ENCODE measurements at regions of chr1 and their contacts with region 1.

Region 1: DNA sequence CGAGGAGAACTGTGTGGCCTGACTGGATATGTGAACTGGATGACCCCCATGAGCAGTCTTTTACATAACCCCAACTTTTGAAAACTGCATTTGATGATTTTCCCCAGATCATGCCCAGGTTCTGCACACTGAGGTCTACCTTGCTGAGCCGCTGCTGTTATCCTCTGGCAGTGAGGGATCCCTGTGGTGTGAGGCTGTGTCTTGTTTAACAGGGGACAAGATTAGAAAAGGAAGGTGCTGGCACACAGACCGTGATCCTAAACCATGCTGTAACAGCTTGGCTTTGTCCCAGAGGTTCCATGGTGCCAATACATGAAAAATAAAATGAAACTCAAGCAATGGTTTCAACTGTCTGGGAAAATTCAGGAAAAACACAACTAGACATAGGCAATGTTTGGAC is 134.2 kb downstream of the ZZZ3 start:
- DNase-seq: no peak
- H3K4me3 ChIP-seq: no peak overlapping the region
- H3K27ac ChIP-seq: no peak overlapping the region
- H3K4me1 ChIP-seq: no peaks in the 10 kb centered on the region
- H3K27me3 ChIP-seq: no peaks in the 10 kb centered on the region
- CTCF ChIP-seq: no peak

Region 2: GRCh38 chr1:77514921-77515776 is 33.1 kb before region 1 on chr1:
- CTCF ChIA-PET with region 1: interaction called, 13 read pairs
- dilution Hi-C with region 1: no loop called
- in situ Hi-C with region 1: no loop called
- intact Hi-C with region 1: no loop called
- DNase-seq: no peak
- H3K4me3 ChIP-seq: no peak overlapping the region
- H3K27ac ChIP-seq: no peak overlapping the region
- H3K4me1 ChIP-seq: peaks cover 27% of the 10 kb centered on the region
- H3K27me3 ChIP-seq: no peaks in the 10 kb centered on the region
- CTCF ChIP-seq: peak in 1 of 2 donors; percentile 1

Region 3: GRCh38 chr1:77706321-77706720 is 158.0 kb after region 1 on chr1:
- CTCF ChIA-PET with region 1: no interaction called
- dilution Hi-C with region 1: no loop called
- in situ Hi-C with region 1: no loop called
- intact Hi-C with region 1: no loop called
- DNase-seq: peak; percentile 32
- H3K4me3 ChIP-seq: no peak overlapping the region
- H3K27ac ChIP-seq: no peak overlapping the region
- H3K4me1 ChIP-seq: no peaks in the 10 kb centered on the region
- H3K27me3 ChIP-seq: no peaks in the 10 kb centered on the region
- CTCF ChIP-seq: no peak

Region 4: GRCh38 chr1:77824083-77824482 is 275.8 kb after region 1 on chr1:
- CTCF ChIA-PET with region 1: no interaction called
- dilution Hi-C with region 1: no loop called
- in situ Hi-C with region 1: no loop called
- intact Hi-C with region 1: no loop called
- DNase-seq: peak; percentile 26
- H3K4me3 ChIP-seq: no peak overlapping the region
- H3K27ac ChIP-seq: peak overlapping the region; percentile 51
- H3K4me1 ChIP-seq: peaks cover 18% of the 10 kb centered on the region
- H3K27me3 ChIP-seq: no peaks in the 10 kb centered on the region
- CTCF ChIP-seq: no peak

Measured in mammary epithelial cell (primary cell).